PC-3 (cell line): ENCODE measurements at regions of chr10 and their contacts with region 1.

Region 1: GRCh38 chr10:93437088-93437945 is 44.8 kb downstream of the MYOF start:
- DNase-seq: peak; percentile 91
- ATAC-seq: peak; percentile 92
- H3K4me3 ChIP-seq: peak overlapping the region; percentile 46
- H3K27ac ChIP-seq: peak overlapping the region; percentile 99
- H3K4me1 ChIP-seq: peaks cover 45% of the 10 kb centered on the region
- H3K27me3 ChIP-seq: no peaks in the 10 kb centered on the region
- CTCF ChIP-seq: no peak

Region 2: DNA sequence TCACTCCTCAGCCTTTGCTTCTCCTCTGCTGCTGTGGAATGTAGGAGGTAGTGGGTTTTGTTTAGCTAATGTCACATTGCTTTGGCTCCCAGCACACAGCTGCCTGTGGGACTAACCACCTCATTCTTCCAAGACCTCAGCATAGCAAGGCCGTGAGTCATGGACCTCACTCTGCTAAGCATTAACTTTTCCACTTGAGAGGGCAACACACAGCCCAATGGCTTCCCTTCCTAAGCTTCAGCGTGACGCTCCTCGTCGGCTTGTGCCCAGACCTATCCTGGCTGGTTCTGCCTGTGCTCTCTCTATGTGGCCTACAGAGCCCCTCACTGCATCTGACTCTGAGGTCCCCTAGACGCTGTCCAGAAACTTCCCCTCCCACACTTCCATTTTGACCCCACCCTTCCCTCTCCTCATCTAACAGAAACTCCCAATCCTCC is 21.5 kb after region 1 on chr10:
- CTCF ChIA-PET with region 1: no interaction called
- POLR2A ChIA-PET with region 1: no interaction called
- intact Hi-C with region 1: loop called (anchors 2 kb)
- DNase-seq: peak; percentile 96
- ATAC-seq: peak; percentile 76
- H3K4me3 ChIP-seq: peak overlapping the region; percentile 38; the same call in 1 of the 2 replicates
- H3K27ac ChIP-seq: peak overlapping the region; percentile 93
- H3K4me1 ChIP-seq: peaks cover 47% of the 10 kb centered on the region
- H3K27me3 ChIP-seq: no peaks in the 10 kb centered on the region
- CTCF ChIP-seq: no peak

Region 3: GRCh38 chr10:93464776-93465388 is 27.6 kb after region 1 on chr10:
- CTCF ChIA-PET with region 1: no interaction called
- POLR2A ChIA-PET with region 1: interaction called, 17 read pairs
- intact Hi-C with region 1: loop called (anchors 2 kb)
- DNase-seq: no peak
- ATAC-seq: no peak
- H3K4me3 ChIP-seq: no peak overlapping the region
- H3K27ac ChIP-seq: peak overlapping the region; percentile 99
- H3K4me1 ChIP-seq: peaks cover 82% of the 10 kb centered on the region
- H3K27me3 ChIP-seq: no peaks in the 10 kb centered on the region
- CTCF ChIP-seq: no peak

Region 4: DNA sequence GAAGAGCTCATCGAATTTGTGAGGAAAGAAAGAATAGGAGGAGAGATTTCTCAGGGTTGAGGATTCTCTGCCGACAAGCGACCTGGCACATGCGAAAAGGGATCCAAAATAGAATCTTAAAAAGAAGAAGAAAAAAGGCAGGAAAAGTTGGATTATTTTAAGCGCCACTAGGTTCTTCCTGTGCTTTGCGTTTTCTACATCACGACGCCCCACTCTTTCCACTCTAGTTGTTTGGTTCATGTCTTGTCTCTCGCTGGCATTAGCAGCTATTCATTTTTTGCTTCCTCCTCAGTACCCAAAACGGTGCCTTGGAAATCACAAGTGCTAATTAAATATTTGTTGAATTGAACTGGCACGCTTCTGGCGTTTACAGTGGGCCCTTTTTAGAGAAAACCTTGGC is 265.7 kb after region 1 on chr10:
- CTCF ChIA-PET with region 1: no interaction called
- POLR2A ChIA-PET with region 1: no interaction called
- intact Hi-C with region 1: no loop called
- DNase-seq: no peak
- ATAC-seq: peak; percentile 27
- H3K4me3 ChIP-seq: peak overlapping the region; percentile 76
- H3K27ac ChIP-seq: peak overlapping the region; percentile 6; the same call in 1 of the 2 replicates
- H3K4me1 ChIP-seq: peaks cover 6% of the 10 kb centered on the region; the same call in 1 of the 2 replicates
- H3K27me3 ChIP-seq: no peaks in the 10 kb centered on the region
- CTCF ChIP-seq: no peak

Region 5: GRCh38 chr10:93897070-93897780 is 459.9 kb after region 1 on chr10:
- CTCF ChIA-PET with region 1: no interaction called
- POLR2A ChIA-PET with region 1: no interaction called
- intact Hi-C with region 1: no loop called
- DNase-seq: no peak
- ATAC-seq: no peak
- H3K4me3 ChIP-seq: no peak overlapping the region
- H3K27ac ChIP-seq: no peak overlapping the region
- H3K4me1 ChIP-seq: peaks cover 12% of the 10 kb centered on the region; the same call in 1 of the 2 replicates
- H3K27me3 ChIP-seq: no peaks in the 10 kb centered on the region
- CTCF ChIP-seq: no peak